Naive thymus-derived CD4-positive, alpha-beta T cell (primary cell): ENCODE measurements at regions of chr22 and their contacts with region 1.

Region 1: DNA sequence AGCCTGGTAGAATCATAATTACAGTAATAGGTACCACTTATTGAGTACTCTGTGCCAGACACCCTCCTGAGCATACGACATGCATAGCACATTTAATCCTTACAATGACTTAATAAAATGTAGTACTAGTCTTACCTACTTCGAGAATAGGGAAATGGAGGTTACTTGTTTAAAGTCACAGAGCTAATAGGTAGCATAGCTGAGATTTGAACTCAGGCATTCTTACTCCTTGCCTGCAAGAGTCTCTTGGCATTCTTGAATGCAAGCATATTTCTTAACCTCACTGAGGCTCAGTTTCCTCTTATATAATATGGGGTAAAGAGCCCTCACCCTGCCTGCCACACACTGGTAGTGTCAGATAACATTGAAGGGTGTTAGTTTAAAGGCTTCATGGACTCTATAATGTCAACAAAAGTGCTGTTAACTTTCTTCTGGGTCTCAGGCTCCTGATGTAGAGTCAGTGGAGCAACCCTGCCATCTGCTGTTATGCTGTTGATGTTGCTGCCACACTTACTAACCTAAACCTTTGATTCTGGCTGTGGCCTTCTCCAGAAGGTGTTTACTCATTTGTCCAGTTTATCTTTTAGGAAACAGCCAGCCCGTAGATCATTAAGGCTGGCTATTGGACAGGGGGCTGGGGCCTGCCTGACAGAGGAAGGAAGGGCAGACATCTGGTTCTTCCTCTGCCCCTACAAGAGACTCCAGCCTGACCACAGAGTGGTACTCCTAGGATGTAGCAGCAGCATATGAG is 18.9 kb downstream of the LIMK2 start:
- DNase-seq: peak in 8 of 9 donors; percentile 28 to 77 (median 64)
- ATAC-seq: peak; percentile 84
- H3K4me3 ChIP-seq: no peak overlapping the region
- H3K4me3 Mint-ChIP-seq: peak overlapping the region; percentile 13 to 78 (median 59)
- H3K27ac ChIP-seq: no peak overlapping the region
- H3K27ac Mint-ChIP-seq: peak overlapping the region; percentile 80 to 95 (median 91)
- H3K4me1 ChIP-seq: peaks cover 7 to 21% of the 10 kb centered on the region in 2 donors
- H3K4me1 Mint-ChIP-seq: peaks cover 49 to 57% (median 55%) of the 10 kb centered on the region in 7 donors
- H3K27me3 ChIP-seq: no peaks in the 10 kb centered on the region
- H3K27me3 Mint-ChIP-seq: no peaks in the 10 kb centered on the region

Region 2: DNA sequence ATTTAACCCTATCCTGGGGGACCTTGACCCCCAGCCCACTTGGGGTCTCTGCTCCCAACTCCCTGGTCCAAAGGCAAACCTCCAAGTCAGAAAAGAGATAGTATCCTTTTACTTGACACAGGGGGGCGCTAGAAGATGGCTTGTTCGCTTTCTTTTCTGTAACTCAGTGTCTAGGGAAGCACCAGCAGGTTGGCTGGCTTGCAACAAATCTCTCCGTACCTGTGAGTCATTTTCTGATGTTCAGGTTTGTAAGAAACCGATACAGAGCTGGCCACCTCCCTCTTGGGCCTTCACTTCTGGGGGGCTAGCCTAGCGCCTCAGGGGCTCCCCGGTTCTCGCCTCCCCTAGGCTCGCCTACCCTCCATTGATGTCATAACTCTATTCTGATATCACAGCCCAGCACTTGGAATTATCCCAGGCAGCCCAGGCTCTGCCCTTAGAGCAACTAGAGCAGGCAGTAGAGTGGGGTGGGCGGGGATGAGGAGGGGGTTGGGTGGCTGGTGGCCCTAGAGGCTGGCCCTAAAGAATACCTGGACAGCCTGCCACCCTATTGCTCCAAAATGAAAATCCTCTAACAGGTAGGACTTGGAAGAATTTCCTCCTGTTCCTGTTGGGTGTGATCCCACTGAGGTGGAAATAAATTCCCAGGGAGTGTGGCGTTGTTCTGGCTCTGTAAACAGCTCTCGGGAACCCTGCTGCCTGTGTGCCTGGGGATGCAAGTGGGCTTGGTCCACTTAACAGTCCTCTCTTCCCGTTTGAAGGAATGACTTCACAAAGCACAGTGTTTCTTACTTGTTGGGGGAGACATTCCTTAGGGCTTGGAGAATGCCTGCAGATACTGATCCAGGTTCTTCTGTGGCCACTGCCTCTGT is 467.0 kb before region 1 on chr22:
- CTCF ChIA-PET with region 1: interaction called, 7 read pairs
- POLR2A ChIA-PET with region 1: no interaction called
- intact Hi-C with region 1: loop called in 1 of 2 experiments (anchors 1 kb)
- DNase-seq: peak in 8 of 9 donors; percentile 41 to 74 (median 66)
- ATAC-seq: peak; percentile 72
- H3K4me3 ChIP-seq: no peak overlapping the region
- H3K4me3 Mint-ChIP-seq: no peak overlapping the region
- H3K27ac ChIP-seq: no peak overlapping the region
- H3K27ac Mint-ChIP-seq: no peak overlapping the region
- H3K4me1 ChIP-seq: no peaks in the 10 kb centered on the region
- H3K4me1 Mint-ChIP-seq: peaks cover 0 to 3% (median 0%) of the 10 kb centered on the region in 7 donors
- H3K27me3 ChIP-seq: no peaks in the 10 kb centered on the region
- H3K27me3 Mint-ChIP-seq: no peaks in the 10 kb centered on the region

Region 3: GRCh38 chr22:30947816-30948454 is 283.1 kb before region 1 on chr22:
- CTCF ChIA-PET with region 1: interaction called, 4 read pairs
- POLR2A ChIA-PET with region 1: no interaction called
- intact Hi-C with region 1: loop called (anchors 1 to 5 kb)
- DNase-seq: peak in 7 of 9 donors; percentile 29 to 67 (median 52)
- ATAC-seq: peak; percentile 72
- H3K4me3 ChIP-seq: no peak overlapping the region
- H3K4me3 Mint-ChIP-seq: no peak overlapping the region
- H3K27ac ChIP-seq: peak overlapping the region; percentile 4
- H3K27ac Mint-ChIP-seq: no peak overlapping the region
- H3K4me1 ChIP-seq: peaks cover 11 to 63% of the 10 kb centered on the region in 2 donors
- H3K4me1 Mint-ChIP-seq: peaks cover 52 to 72% (median 65%) of the 10 kb centered on the region in 7 donors
- H3K27me3 ChIP-seq: no peaks in the 10 kb centered on the region
- H3K27me3 Mint-ChIP-seq: no peaks in the 10 kb centered on the region

Region 4: DNA sequence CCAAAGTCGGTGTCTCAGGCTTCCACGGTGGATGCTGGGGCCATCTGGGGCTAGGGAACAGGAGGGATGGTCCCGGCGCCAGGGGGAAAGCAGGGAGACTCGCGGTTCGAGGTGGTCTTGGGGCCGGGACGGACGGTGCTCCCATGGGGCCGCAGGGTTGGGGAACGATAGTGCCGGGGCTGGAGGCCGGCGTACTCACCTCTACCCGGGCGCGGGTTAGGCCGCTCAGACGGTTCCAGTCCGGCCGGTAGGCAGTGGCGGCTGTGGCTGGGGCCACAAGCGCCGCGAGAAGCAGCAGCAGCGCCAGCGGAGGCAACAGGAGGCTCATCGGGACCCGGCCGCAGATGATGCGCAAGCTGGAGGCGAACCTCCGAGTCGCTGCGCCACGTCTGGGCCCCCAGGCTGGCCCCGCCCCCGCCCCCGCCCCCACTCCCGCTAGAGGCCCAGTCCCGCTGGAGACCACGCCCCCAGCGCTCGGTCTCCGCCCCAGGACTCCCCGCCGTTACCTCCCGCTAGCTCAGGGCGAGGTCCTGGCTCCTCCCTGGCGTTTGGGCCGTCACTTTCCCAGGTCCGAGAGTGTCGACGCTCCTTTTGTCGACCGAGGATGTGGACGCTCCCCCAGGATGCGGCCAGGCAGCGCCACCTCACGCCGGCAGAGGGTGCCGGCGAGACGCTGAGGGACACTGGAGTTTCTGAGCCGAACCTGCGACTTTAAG is 123.7 kb before region 1 on chr22 and contains the start of gene SELENOM:
- CTCF ChIA-PET with region 1: interaction called, 3 read pairs
- POLR2A ChIA-PET with region 1: no interaction called
- intact Hi-C with region 1: loop called (anchors 1 kb)
- DNase-seq: peak; percentile 73 to 89 (median 84)
- ATAC-seq: peak; percentile 98
- H3K4me3 ChIP-seq: peak within 1 kb of the TSS; percentile 94
- H3K4me3 Mint-ChIP-seq: peak within 1 kb of the TSS; percentile 88 to 98 (median 93)
- H3K27ac ChIP-seq: peak within 1 kb of the TSS; percentile 86
- H3K27ac Mint-ChIP-seq: peak within 1 kb of the TSS; percentile 81 to 96 (median 90)
- H3K4me1 ChIP-seq: peaks cover 8 to 16% of the 10 kb centered on the region in 2 donors
- H3K4me1 Mint-ChIP-seq: peaks cover 12 to 26% (median 20%) of the 10 kb centered on the region in 7 donors
- H3K27me3 ChIP-seq: no peaks in the 10 kb centered on the region
- H3K27me3 Mint-ChIP-seq: peaks cover 0 to 3% (median 0%) of the 10 kb centered on the region in 5 donors
- total RNA-seq, gene SELENOM: 9.1 to 71.5 (median 68.6) TPM

Region 5: GRCh38 chr22:31211862-31212730 is 18.9 kb before region 1 on chr22 and contains the start of gene LIMK2:
- CTCF ChIA-PET with region 1: interaction called, 88 read pairs
- POLR2A ChIA-PET with region 1: interaction called, 73 read pairs
- intact Hi-C with region 1: loop called (anchors 1 kb)
- DNase-seq: peak; percentile 90 to 99 (median 95)
- ATAC-seq: peak; percentile 100
- H3K4me3 ChIP-seq: peak within 1 kb of the TSS; percentile 83
- H3K4me3 Mint-ChIP-seq: peak within 1 kb of the TSS; percentile 86 to 91 (median 88)
- H3K27ac ChIP-seq: peak within 1 kb of the TSS; percentile 82
- H3K27ac Mint-ChIP-seq: peak within 1 kb of the TSS; percentile 82 to 96 (median 89)
- H3K4me1 ChIP-seq: peaks cover 23 to 31% of the 10 kb centered on the region in 2 donors
- H3K4me1 Mint-ChIP-seq: peaks cover 38 to 72% (median 51%) of the 10 kb centered on the region in 7 donors
- H3K27me3 ChIP-seq: no peaks in the 10 kb centered on the region
- H3K27me3 Mint-ChIP-seq: no peaks in the 10 kb centered on the region
- total RNA-seq, gene LIMK2: 18.3 to 49.9 (median 28.8) TPM

Region 6: DNA sequence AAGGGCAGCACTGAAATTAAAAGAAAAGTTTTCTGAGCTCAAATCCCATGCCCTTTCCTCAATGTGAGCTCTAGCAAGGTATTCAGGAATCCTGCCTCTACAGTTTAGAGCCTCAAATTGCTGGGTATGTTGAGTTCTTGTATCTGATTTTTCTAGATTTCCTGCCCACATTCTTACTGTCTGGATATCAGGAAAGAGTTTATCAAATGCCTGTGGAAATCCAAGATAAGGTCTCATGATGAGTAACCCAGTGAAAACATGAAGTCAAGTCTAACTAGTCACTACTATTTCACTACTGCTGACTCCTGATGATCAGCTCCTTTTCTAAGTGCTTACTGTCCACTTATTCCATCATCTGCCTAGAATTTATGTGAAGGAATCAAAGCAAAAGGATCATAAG is 10.9 kb after region 1 on chr22:
- CTCF ChIA-PET with region 1: interaction called, 4 read pairs
- POLR2A ChIA-PET with region 1: no interaction called
- intact Hi-C with region 1: loop called in 1 of 2 experiments (anchors 1 kb)
- DNase-seq: no peak
- ATAC-seq: no peak
- H3K4me3 ChIP-seq: no peak overlapping the region
- H3K4me3 Mint-ChIP-seq: no peak overlapping the region
- H3K27ac ChIP-seq: no peak overlapping the region
- H3K27ac Mint-ChIP-seq: no peak overlapping the region
- H3K4me1 ChIP-seq: peaks cover 0 to 4% of the 10 kb centered on the region in 2 donors
- H3K4me1 Mint-ChIP-seq: peaks cover 8 to 47% (median 17%) of the 10 kb centered on the region in 7 donors
- H3K27me3 ChIP-seq: no peaks in the 10 kb centered on the region
- H3K27me3 Mint-ChIP-seq: no peaks in the 10 kb centered on the region